BJ (cell line): ENCODE measurements at regions of chr1 and their contacts with region 1.

Region 1: GRCh38 chr1:226547754-226548191 is 791 bp upstream of the STUM start:
- DNase-seq: peak; percentile 40
- H3K4me3 ChIP-seq: no peak overlapping the region
- H3K27me3 ChIP-seq: peaks cover 29% of the 10 kb centered on the region
- CTCF ChIP-seq: peak; percentile 95

Region 2: GRCh38 chr1:226603022-226603857 is 55.5 kb after region 1 on chr1:
- CTCF ChIA-PET with region 1: interaction called, 29 read pairs
- POLR2A ChIA-PET with region 1: no interaction called
- DNase-seq: peak; percentile 40
- H3K4me3 ChIP-seq: no peak overlapping the region
- H3K27me3 ChIP-seq: peaks cover 1% of the 10 kb centered on the region; the same call in 1 of the 2 replicates
- CTCF ChIP-seq: no peak

Region 3: DNA sequence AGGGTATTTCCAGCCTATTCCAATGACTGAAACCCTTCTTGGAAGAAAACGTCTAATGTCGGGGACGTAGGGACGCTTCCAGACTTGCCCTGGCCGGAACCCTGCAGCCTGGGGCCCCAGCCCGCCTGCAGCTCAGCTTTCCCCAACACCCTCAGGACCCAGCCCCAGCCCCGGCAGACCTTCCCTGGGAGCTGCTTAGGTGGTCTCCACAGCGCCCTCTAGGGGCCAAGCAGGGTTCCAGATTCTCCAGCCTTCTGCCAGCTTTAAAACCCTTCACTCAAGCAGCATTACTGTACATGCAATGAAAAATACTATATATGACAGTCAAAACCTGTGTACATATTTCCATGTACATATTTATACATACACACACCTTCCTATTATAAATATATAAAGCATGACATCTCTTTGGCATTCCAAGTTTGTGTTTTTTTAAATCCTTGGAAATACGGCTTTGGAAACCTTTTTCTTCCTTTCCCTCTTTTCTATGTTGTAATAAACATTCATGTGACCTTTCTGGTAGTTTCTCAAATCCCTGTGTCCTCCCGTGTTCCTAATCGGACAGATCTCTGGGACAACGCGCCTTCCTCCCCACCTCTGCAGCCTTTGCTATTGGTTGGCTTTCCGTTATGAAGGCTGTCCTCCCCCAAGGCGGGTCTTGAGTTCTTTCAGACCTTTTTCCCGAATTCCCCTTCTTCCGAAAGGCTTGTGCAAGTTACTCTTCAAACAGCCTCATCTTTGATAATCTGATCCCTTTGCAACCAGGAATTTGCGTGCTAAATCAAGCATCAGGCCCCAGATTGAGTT is 61.1 kb after region 1 on chr1:
- CTCF ChIA-PET with region 1: interaction called, 29 read pairs
- POLR2A ChIA-PET with region 1: no interaction called
- DNase-seq: no peak
- H3K4me3 ChIP-seq: no peak overlapping the region
- H3K27me3 ChIP-seq: peaks cover 2% of the 10 kb centered on the region; the same call in 1 of the 2 replicates
- CTCF ChIP-seq: peak; percentile 88

Region 4: GRCh38 chr1:226626577-226626956 is 78.8 kb after region 1 on chr1:
- CTCF ChIA-PET with region 1: interaction called, 6 read pairs
- POLR2A ChIA-PET with region 1: interaction called, 18 read pairs
- DNase-seq: no peak
- H3K4me3 ChIP-seq: no peak overlapping the region
- H3K27me3 ChIP-seq: peaks cover 1% of the 10 kb centered on the region; the same call in 1 of the 2 replicates
- CTCF ChIP-seq: peak; percentile 97

Region 5: GRCh38 chr1:226634166-226634588 is 86.4 kb after region 1 on chr1:
- CTCF ChIA-PET with region 1: interaction called, 12 read pairs
- POLR2A ChIA-PET with region 1: no interaction called
- DNase-seq: no peak
- H3K4me3 ChIP-seq: no peak overlapping the region
- H3K27me3 ChIP-seq: peaks cover 1% of the 10 kb centered on the region; the same call in 1 of the 2 replicates
- CTCF ChIP-seq: peak; percentile 95